ENCODE measurements at regions of chr6 and their contacts with region 1.

Region 1: DNA sequence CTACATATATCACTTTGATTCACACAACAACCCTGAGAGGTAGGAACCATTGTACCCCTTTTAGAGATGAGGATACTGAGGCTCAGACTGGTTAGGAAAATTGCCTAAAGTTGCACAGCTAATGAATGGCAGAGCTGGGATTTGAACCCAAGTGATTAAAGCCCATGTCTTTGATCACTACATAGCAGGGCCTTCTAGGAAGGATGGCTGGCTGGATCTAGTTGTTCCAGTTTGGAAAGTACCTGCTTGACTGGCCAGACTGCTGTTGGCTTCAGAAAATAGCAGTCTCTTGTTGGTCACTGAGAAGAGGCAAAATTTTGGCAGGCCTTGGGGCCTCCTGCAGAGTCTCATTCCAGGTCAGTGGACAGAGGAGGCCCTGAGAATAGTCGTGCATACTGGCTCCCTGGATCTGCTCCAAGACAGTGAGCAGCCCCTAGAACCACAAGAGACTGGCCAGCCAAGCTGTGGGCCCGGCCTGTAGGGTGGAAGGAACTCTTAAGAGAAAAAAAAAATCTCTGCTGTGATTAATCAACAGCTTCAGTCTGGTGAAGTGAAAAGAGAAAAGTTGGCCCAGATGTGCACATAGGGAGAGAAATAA is 17.5 kb downstream of the PPARD start:
- DNase-seq: peak; percentile 37
- ATAC-seq: peak; percentile 60 to 61

Region 2: GRCh38 chr6:35377002-35377401 is 17.2 kb after region 1 on chr6:
- intact Hi-C with region 1: loop called in 1 of 2 experiments (anchors 2 kb)
- DNase-seq: no peak
- ATAC-seq: peak in 1 of 2 donors; percentile 27

Region 3: DNA sequence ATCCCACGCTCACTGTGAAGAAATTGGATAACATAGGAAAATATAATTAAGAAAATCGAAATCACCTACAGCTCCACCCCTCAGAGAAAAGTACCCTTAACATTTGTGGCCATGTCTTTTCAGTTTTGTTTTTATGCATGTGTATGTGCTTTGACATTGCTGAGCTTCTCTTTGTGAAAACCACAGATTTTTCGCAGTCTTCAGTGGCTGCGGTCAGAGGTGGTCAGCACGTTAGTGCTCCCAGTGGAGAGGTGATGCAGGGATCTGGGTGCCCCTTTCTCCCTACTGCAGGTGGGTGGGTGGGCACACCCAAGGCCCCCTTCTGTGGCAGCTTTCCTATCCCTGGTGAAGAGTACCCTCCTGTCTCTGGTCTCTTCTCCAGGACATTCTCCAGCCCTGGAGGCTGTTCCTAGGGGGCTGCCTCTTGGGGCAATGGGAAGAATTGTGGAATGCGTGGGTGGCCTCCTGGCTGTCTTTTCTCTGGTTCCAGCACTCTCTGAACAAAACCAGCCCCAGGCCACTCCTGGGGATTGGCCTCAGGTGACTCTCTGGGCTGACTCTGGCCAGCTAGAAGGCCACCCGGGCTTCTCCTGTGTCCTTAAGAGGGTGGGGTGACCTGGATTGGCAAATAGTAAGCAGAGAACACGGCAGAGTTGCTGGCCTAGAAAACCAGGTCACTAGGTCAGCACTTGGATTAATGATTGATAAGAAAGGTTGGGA is 42.4 kb after region 1 on chr6:
- intact Hi-C with region 1: loop called in 1 of 2 experiments (anchors 10 kb)
- DNase-seq: no peak
- ATAC-seq: no peak